HEK293 (cell line): ENCODE measurements at regions of chr1 and their contacts with region 1.

Region 1: DNA sequence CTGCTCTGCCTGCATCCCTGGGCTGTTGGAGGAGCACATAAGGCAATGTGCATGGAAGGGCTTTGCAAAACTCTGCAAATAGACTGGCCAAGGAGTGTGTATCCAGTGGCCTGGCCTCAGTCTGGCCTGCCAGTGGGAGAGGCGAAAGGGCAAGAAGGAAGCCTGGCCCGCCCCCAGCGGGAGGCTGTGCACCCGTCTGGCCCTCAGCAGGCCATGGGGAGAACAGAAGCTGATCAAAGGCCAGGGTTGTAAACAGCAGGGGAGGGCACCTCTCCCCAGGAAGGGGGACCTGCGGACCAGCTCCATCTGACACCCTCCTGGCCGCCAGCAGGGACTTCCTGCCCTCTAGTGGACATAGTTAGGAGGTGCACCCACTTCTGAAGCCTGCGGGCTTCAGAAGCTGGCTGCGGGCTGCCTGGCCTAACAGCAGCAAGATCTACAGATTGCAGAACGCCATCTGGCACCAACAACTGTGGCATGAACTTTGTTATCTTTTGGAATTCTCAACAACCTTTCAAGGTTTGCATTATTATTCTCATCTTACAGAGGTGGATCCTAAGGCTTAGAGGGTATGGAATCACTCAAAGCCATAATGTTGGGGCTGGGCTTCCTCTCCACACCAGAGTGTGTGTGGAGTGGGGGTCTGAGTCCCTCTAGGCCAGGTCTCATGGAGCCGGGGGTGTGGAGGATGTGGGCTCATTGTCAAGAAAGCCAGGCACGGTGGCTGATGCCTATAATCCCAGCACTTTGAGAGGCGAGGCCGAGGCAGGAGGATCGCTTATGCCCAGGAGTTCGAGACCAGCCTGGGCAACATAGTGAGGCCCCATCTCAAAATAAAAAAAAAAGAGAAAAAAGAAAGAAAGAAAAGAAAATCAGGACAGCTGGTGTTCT is 18.9 kb upstream of the CDK18 start:
- H3K4me3 ChIP-seq: no peak overlapping the region
- H3K27ac ChIP-seq: no peak overlapping the region
- H3K4me1 ChIP-seq: no peaks in the 10 kb centered on the region
- CTCF ChIP-seq: peak; percentile 94

Region 2: DNA sequence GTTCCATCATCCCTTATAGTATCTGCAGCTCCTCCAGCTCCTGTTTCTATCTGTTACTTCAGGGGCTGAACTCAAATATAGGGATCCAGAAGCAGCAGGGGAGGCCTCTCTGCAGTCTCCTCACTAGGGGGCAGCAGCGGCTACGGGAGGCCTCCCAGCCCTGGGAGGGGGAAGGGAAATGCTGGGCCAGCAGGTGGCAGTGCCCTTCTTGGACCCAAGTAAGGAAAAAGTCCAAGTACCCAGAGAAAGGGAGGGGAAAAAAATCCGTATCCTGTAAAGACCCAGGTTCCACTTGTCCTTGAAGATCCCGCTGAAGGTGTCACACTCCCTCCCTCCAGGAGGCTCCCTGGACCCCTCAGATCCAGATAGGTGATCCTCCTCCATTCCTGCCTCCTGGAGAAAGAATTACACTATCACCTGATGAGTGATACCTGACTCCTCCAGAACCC is 149.9 kb before region 1 on chr1:
- CTCF ChIA-PET with region 1: interaction called, 59 read pairs
- POLR2A ChIA-PET with region 1: no interaction called
- H3K4me3 ChIP-seq: no peak overlapping the region
- H3K27ac ChIP-seq: no peak overlapping the region
- H3K4me1 ChIP-seq: 0 out of 2 replicates have a peak, but pooled peaks cover 2% of the 10 kb centered on the region
- CTCF ChIP-seq: peak; percentile 97

Region 3: GRCh38 chr1:205391386-205391785 is 94.2 kb before region 1 on chr1:
- CTCF ChIA-PET with region 1: interaction called, 201 read pairs
- POLR2A ChIA-PET with region 1: no interaction called
- H3K4me3 ChIP-seq: no peak overlapping the region
- H3K27ac ChIP-seq: no peak overlapping the region
- H3K4me1 ChIP-seq: no peaks in the 10 kb centered on the region
- CTCF ChIP-seq: no peak

Region 4: GRCh38 chr1:205416322-205416721 is 69.3 kb before region 1 on chr1:
- CTCF ChIA-PET with region 1: interaction called, 50 read pairs
- POLR2A ChIA-PET with region 1: no interaction called
- H3K4me3 ChIP-seq: no peak overlapping the region
- H3K27ac ChIP-seq: no peak overlapping the region
- H3K4me1 ChIP-seq: peaks cover 3% of the 10 kb centered on the region; the same call in 1 of the 2 replicates
- CTCF ChIP-seq: no peak

Region 5: GRCh38 chr1:205440476-205441317 is 44.9 kb before region 1 on chr1:
- CTCF ChIA-PET with region 1: interaction called, 48 read pairs
- POLR2A ChIA-PET with region 1: no interaction called
- H3K4me3 ChIP-seq: no peak overlapping the region
- H3K27ac ChIP-seq: no peak overlapping the region; the same call in 1 of the 2 replicates
- H3K4me1 ChIP-seq: peaks cover 3% of the 10 kb centered on the region; the same call in 1 of the 2 replicates
- CTCF ChIP-seq: no peak

Region 6: DNA sequence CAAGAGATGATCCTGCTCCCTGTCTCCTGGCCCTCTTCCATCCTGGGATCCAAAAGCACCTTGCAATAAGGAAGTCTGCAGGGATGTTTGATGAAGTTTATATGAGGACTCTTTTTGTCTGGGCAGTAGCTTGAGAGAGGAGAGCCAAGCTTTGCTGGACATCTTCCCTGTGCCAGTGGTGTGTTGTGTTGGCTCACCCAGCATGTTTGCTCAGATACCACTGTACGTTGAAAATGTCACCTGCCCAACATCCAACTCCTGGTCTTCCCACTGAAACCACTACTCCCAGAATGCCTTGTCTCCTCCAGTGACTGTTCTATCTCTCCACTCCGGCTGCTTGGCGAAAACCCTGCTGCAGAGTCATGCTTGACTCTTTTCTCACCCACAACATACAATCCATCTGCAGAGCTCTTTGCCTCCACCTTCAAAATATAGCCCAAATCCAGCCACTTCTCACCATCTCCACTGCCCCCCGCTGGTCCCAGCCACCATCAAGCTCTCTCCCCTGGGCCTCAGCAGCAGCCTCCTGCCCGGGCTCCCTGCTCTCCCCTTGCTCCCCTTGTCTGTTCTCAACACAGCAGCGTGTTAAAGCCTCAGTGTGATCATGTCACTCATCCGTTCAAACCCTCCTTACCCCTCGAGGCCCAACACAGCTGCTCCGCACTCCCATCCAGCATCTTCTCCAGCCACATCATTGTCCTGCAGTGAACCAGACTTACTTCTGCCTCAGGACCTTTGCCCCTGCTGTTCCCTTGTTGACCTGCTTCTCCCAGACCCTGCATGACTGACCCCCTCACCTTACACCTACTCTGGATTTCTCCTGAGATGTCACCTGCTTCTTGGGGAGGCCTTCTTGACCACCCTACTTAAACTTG is 31.9 kb after region 1 on chr1:
- CTCF ChIA-PET with region 1: interaction called, 459 read pairs
- POLR2A ChIA-PET with region 1: interaction called, 3 read pairs
- H3K4me3 ChIP-seq: no peak overlapping the region
- H3K27ac ChIP-seq: no peak overlapping the region
- H3K4me1 ChIP-seq: peaks cover 8% of the 10 kb centered on the region
- CTCF ChIP-seq: peak; percentile 41; the same call in 1 of the 2 replicates

Region 7: GRCh38 chr1:205658943-205659581 is 173.5 kb after region 1 on chr1:
- CTCF ChIA-PET with region 1: interaction called, 16 read pairs
- POLR2A ChIA-PET with region 1: no interaction called
- H3K4me3 ChIP-seq: no peak overlapping the region
- H3K27ac ChIP-seq: no peak overlapping the region
- H3K4me1 ChIP-seq: no peaks in the 10 kb centered on the region
- CTCF ChIP-seq: peak; percentile 87

Region 8: DNA sequence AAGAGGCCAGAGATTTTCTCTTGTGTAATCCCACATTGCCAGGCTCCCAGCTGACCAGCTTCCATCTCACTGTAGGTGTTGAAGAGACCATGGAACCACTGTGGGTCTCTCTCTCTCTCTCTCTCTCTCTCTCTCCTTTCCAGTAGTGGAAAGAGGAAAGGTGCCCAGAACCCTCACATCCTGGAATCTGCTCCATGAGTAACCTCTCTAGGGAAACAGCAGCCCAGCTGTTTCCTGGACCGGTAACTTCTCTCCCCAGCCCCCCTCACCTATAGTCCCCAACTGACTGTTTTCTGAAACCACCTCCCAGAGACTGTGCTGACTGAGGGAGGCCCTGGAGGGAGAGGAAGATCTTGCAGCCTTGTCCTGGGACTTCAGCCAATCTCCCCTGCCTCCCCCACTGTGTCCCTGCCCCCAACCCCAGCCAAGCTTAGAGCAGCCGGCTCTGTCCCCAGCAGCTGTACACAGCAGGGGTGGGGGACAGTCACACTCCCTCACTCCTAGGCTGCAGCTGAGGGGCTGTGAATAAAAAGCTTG is 215.3 kb after region 1 on chr1:
- CTCF ChIA-PET with region 1: no interaction called
- POLR2A ChIA-PET with region 1: no interaction called
- H3K4me3 ChIP-seq: no peak overlapping the region
- H3K27ac ChIP-seq: no peak overlapping the region
- H3K4me1 ChIP-seq: 0 out of 2 replicates have a peak, but pooled peaks cover 4% of the 10 kb centered on the region
- CTCF ChIP-seq: no peak